ENCODE measurements at regions of chr20 and their contacts with region 1.

Region 1: DNA sequence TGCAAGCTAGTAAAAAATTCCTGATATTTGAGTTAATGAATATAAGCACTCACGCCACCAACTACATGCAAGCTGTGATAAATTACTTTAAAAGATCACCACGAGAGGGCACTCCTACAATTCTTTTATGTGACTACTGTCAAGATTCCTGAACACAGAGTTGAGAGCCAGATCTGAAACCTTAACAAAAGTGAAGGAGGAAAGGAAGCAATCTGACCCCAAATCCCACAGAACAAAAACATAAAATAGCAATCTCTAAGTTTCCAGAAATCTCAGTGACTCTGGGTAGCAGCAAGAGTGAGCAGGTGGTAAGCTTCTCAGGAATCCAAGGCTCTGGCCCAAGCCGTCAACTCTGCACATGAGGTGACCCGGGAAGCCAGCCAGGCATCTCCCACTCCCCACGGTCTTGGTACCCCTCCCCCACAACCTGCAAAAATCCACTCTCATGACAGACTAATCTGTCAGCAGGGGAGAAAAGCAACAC is 55.1 kb downstream of the STAU1 start:
- DNase-seq: peak; percentile 49
- H3K4me3 ChIP-seq: no peak overlapping the region
- H3K27ac ChIP-seq: no peak overlapping the region
- H3K4me1 ChIP-seq: no peaks in the 10 kb centered on the region; a peak in 1 of 4 replicates
- H3K27me3 ChIP-seq: no peaks in the 10 kb centered on the region
- CTCF ChIP-seq: peak; percentile 72
- EP300 ChIP-seq: no peak
- RAD21 ChIP-seq: peak; percentile 79

Region 2: GRCh38 chr20:48238326-48238725 is 894.7 kb before region 1 on chr20:
- CTCF ChIA-PET with region 1: no interaction called
- POLR2A ChIA-PET with region 1: no interaction called
- DNase-seq: no peak
- H3K4me3 ChIP-seq: no peak overlapping the region
- H3K27ac ChIP-seq: no peak overlapping the region
- H3K4me1 ChIP-seq: peaks cover 0 to 7% of the 10 kb centered on the region in 2 experiments; a peak in 1 of 4 replicates
- H3K27me3 ChIP-seq: no peaks in the 10 kb centered on the region; the same call in 1 of the 2 replicates
- CTCF ChIP-seq: no peak
- EP300 ChIP-seq: no peak
- RAD21 ChIP-seq: no peak

Region 3: GRCh38 chr20:49078296-49078695 is 54.7 kb before region 1 on chr20:
- CTCF ChIA-PET with region 1: no interaction called
- POLR2A ChIA-PET with region 1: no interaction called
- DNase-seq: no peak
- H3K4me3 ChIP-seq: no peak overlapping the region
- H3K27ac ChIP-seq: no peak overlapping the region
- H3K4me1 ChIP-seq: no peaks in the 10 kb centered on the region
- H3K27me3 ChIP-seq: no peaks in the 10 kb centered on the region
- CTCF ChIP-seq: no peak
- EP300 ChIP-seq: no peak
- RAD21 ChIP-seq: no peak

Region 4: DNA sequence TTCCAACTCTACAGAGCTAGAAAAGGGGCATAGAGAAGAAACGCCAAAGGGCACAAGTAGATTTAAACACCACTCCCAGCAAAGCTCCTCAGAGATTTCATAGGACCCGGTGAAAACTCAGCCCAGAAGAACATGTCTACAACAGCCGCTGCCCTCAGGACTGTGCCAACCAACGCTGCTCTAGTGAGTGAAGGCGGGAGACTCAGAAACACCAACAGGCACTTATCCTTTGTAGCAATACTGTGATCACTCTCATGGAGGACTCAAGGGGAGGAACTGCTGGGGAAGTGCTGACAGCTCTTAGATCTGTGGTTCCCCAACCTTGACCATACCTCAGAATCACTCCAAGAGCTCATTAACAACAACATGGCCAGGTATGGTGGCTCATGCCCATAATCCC is 15.6 kb after region 1 on chr20:
- CTCF ChIA-PET with region 1: interaction called, 29 read pairs
- POLR2A ChIA-PET with region 1: no interaction called
- DNase-seq: no peak
- H3K4me3 ChIP-seq: no peak overlapping the region
- H3K27ac ChIP-seq: no peak overlapping the region
- H3K4me1 ChIP-seq: no peaks in the 10 kb centered on the region
- H3K27me3 ChIP-seq: no peaks in the 10 kb centered on the region
- CTCF ChIP-seq: no peak
- EP300 ChIP-seq: no peak
- RAD21 ChIP-seq: no peak

Region 5: DNA sequence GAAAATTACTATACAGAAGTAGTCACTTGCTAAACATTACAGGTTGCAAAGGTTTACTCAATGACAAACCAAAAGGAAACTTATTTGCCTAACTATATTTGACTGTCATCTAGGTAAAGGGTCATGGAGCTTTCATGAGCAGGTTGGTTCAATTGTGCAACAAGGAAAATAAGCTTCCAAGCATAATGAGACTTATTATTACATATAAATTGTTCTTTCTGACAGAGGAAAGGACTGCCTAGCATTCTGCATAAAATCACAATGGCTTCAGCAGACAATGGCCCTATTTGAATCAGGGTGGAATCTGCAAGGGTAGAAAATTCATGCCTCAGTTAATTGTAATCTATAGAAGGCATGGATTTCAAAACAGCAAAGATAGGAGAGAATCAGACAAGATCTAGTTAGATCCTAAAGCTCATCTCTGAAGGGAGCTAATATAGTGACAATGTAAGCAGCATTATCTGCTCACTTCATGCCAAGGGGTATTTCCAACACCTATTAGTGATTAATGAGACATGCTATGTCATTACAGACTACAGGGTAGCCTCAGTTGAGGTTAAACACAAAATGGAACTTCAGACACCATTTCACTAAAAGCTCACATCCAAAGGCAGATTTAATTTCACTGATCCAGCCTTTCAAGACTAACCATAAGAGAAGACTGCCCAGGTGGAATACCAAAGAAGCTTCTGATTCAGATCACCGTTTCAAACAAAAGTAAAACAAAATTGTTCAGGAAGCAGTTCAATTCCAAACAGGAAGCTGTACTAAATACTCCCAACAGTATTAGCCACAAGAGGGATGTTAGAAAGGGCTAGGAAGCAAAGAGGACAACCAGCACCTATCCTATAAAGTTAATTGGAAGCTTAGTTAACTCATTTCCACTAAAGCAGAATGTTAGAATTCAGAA is 46.6 kb after region 1 on chr20:
- CTCF ChIA-PET with region 1: interaction called, 21 read pairs
- POLR2A ChIA-PET with region 1: no interaction called
- DNase-seq: no peak
- H3K4me3 ChIP-seq: no peak overlapping the region
- H3K27ac ChIP-seq: 0 out of 4 replicates have a peak overlapping the region, but pooled peaks of 1 of the 2 experiments have one; percentile 1
- H3K4me1 ChIP-seq: peaks cover 2 to 7% of the 10 kb centered on the region in 2 experiments; a peak in 3 of 4 replicates
- H3K27me3 ChIP-seq: no peaks in the 10 kb centered on the region
- CTCF ChIP-seq: no peak
- EP300 ChIP-seq: no peak
- RAD21 ChIP-seq: no peak

Region 6: DNA sequence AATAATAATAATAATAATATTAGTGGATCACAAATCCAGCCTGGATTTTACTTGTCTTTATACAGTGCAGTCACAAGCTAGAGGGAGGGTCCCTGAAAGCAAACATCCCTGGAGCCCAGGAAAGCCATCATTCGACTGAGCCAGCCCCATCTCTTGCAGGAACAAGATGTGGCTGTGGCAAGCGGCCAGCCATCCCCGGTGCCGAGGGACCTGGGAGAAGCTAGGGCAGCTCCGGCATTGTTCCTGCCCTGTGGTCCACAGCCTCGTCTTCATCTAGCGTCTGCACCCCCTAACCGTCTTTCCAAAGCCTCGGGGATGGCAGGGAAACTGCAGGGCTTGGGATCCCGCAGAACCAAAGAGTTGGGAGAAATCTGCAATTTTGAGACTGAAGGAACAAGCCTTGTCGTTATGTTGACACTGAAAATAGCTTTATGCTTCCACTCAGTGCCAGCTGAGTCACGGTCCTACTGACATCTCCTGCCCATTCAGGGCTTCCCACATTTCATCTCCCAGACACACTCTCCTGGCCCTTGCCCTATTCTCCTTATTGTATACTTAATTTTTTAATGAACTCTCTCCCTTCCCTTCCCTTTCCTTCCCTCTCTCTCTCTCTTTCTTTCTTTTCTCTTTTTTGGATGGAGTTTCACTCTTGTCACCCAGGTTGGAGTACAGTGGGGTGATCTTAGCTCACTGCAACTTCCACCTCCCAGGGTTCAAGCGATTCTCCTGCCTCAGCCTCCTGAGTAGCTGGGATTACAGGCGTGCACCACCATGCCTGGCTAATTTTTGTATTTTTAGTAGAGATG is 207.3 kb after region 1 on chr20:
- CTCF ChIA-PET with region 1: no interaction called
- POLR2A ChIA-PET with region 1: no interaction called
- DNase-seq: peak; percentile 52
- H3K4me3 ChIP-seq: no peak overlapping the region
- H3K27ac ChIP-seq: 0 out of 4 replicates have a peak overlapping the region, but pooled peaks of 1 of the 2 experiments have one; percentile 9
- H3K4me1 ChIP-seq: peaks cover 4 to 7% of the 10 kb centered on the region in 2 experiments; a peak in 2 of 4 replicates
- H3K27me3 ChIP-seq: no peaks in the 10 kb centered on the region
- CTCF ChIP-seq: no peak
- EP300 ChIP-seq: no peak
- RAD21 ChIP-seq: no peak